ENCODE measurements at regions of chr22 and their contacts with region 1.

Region 1: GRCh38 chr22:36331306-36331911 is 56.4 kb downstream of the MYH9 start:
- DNase-seq: peak; percentile 80
- H3K4me3 ChIP-seq: no peak overlapping the region
- H3K27ac ChIP-seq: peak overlapping the region; percentile 94 to 96
- H3K4me1 ChIP-seq: peaks cover 97% of the 10 kb centered on the region
- H3K27me3 ChIP-seq: no peaks in the 10 kb centered on the region
- CTCF ChIP-seq: no peak
- POLR2A ChIP-seq: peak; percentile 53

Region 2: GRCh38 chr22:35712672-35713071 is 618.7 kb before region 1 on chr22:
- intact Hi-C with region 1: no loop called
- DNase-seq: no peak
- H3K4me3 ChIP-seq: no peak overlapping the region
- H3K27ac ChIP-seq: no peak overlapping the region
- H3K4me1 ChIP-seq: no peaks in the 10 kb centered on the region
- H3K27me3 ChIP-seq: no peaks in the 10 kb centered on the region
- CTCF ChIP-seq: no peak
- POLR2A ChIP-seq: no peak

Region 3: GRCh38 chr22:36365020-36365411 is 33.6 kb after region 1 on chr22:
- intact Hi-C with region 1: loop called (anchors 5 kb)
- DNase-seq: no peak
- H3K4me3 ChIP-seq: no peak overlapping the region
- H3K27ac ChIP-seq: peak overlapping the region; percentile 91 to 96
- H3K4me1 ChIP-seq: peaks cover 70% of the 10 kb centered on the region
- H3K27me3 ChIP-seq: no peaks in the 10 kb centered on the region
- CTCF ChIP-seq: no peak
- POLR2A ChIP-seq: no peak

Region 4: GRCh38 chr22:36387752-36388518 is 56.5 kb after region 1 on chr22 and contains the start of gene MYH9:
- intact Hi-C with region 1: loop called (anchors 2 kb)
- DNase-seq: peak; percentile 100
- H3K4me3 ChIP-seq: peak within 1 kb of the TSS; percentile 99
- H3K27ac ChIP-seq: peak within 1 kb of the TSS; percentile 99 to 100
- H3K4me1 ChIP-seq: peaks cover 13% of the 10 kb centered on the region
- H3K27me3 ChIP-seq: no peaks in the 10 kb centered on the region
- CTCF ChIP-seq: peak in 1 of 4 experiments; percentile 35
- POLR2A ChIP-seq: peak; percentile 100
- total RNA-seq, gene MYH9: 295 to 329 TPM

Measured in prostate gland (tissue), 2 donors.